SK-N-SH (cell line): ENCODE measurements at regions of chr2 and their contacts with region 1.

Region 1: GRCh38 chr2:201071479-201072200 is at the starts of genes HYCC2 and NDUFB3:
- DNase-seq: peak; percentile 97
- H3K4me3 ChIP-seq: peak within 1 kb of the TSS; percentile 88 to 98
- H3K27ac ChIP-seq: peak within 1 kb of the TSS; percentile 86 to 95
- H3K4me1 ChIP-seq: peaks cover 7 to 12% of the 10 kb centered on the region in 2 experiments; a peak in 3 of 4 replicates
- H3K27me3 ChIP-seq: no peaks in the 10 kb centered on the region
- CTCF ChIP-seq: peak; percentile 34
- EP300 ChIP-seq: no peak
- RAD21 ChIP-seq: peak; percentile 29; the same call in 1 of the 2 replicates
- polyA plus RNA-seq, gene HYCC2: 1.2 and 1.8 TPM in 2 replicates
- polyA plus RNA-seq, gene NDUFB3: 55.9 and 73.7 TPM in 2 replicates

Region 2: DNA sequence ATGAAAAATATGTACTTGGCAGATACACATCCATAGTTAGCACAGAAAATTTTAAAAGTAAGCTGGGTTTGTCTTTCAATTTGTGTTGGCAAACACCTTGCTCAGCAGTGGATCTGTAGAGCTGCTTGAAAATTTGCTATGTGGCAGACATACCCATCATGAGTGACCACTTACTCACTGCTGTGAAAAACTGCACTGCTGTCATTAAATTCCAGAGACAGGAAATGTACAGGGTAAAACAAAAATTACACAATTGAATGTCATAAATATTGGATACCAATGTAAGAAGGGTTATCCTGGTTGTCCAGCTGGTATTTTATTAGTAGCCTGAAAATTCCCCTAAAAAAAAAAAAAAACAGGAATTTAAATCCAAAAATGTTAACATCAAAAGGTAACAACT is 158.0 kb before region 1 on chr2:
- CTCF ChIA-PET with region 1: interaction called, 10 read pairs
- POLR2A ChIA-PET with region 1: no interaction called
- DNase-seq: no peak
- H3K4me3 ChIP-seq: no peak overlapping the region
- H3K27ac ChIP-seq: peak overlapping the region in 1 of 2 experiments; percentile 27; a peak in 1 of 4 replicates
- H3K4me1 ChIP-seq: no peaks in the 10 kb centered on the region
- H3K27me3 ChIP-seq: no peaks in the 10 kb centered on the region
- CTCF ChIP-seq: no peak
- EP300 ChIP-seq: no peak
- RAD21 ChIP-seq: no peak

Region 3: DNA sequence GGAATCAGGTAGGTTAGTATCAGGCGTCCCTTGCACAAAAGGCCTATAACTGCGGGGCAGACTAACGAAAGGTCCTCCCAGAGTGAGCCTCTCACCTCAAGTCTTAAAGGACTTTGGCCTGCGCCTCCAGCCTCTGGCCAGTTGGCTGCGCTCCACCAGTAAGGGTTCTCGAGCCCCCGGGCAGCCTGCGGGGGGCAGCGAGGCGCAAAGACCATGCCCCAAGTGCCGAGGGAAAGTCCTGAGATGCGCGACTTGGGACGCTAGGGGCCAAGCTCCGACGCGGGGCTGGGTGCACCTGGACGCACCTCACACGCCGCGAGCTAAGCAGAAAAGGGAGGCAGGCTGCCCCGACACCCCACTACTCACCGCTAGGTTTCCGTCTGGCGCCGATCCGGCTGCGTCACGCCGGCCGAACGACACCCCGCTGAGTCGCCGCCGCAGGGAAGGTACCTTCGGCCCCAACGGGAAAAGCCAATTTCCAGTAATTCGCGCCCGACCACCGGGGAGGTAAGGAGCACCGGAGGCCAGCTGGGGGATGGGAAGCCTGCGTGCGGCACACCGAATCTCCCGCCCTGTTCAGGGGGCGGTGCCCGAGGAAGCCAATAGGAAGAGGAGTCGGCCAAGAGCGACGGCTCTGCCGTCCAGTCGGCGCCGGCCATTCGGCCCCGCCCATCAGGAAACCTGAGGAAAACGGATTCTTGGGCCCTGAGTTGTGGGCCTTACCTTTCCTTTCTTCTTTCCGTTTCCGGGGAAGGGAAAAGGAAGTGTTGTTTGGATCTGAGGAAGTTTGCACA is 108.3 kb before region 1 on chr2 and contains the start of gene ORC2:
- CTCF ChIA-PET with region 1: interaction called, 57 read pairs
- POLR2A ChIA-PET with region 1: interaction called, 8 read pairs
- DNase-seq: peak; percentile 96
- H3K4me3 ChIP-seq: peak within 1 kb of the TSS; percentile 82 to 88
- H3K27ac ChIP-seq: peak within 1 kb of the TSS; percentile 75 to 82
- H3K4me1 ChIP-seq: peaks cover 11 to 12% of the 10 kb centered on the region in 2 experiments; a peak in 3 of 4 replicates
- H3K27me3 ChIP-seq: no peaks in the 10 kb centered on the region
- CTCF ChIP-seq: peak; percentile 72
- EP300 ChIP-seq: no peak
- RAD21 ChIP-seq: peak; percentile 45
- polyA plus RNA-seq, gene ORC2: 3.4 and 3.9 TPM in 2 replicates

Region 4: DNA sequence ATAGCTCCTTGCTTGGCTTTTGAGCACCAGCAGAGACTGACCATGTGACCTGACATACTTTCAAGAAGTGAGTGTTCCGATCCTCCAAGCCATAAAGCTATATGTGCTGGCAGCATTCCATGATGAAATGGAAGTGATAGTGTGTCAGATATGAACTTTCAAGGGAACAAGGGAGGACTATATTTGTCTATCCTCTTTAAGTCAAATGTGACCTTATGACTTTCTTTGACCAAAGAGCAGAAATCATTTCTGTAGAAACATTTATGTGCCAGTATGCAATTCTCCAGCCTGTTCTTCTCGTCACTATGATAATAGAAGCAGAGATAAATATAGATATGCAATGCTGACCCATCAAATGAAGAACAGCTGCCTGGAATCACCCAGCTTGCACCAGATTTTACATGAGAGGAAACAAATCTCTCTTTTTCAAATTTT is 14.5 kb before region 1 on chr2:
- CTCF ChIA-PET with region 1: interaction called, 20 read pairs
- POLR2A ChIA-PET with region 1: no interaction called
- DNase-seq: peak; percentile 44
- H3K4me3 ChIP-seq: no peak overlapping the region; a peak in 1 of 4 replicates
- H3K27ac ChIP-seq: peak overlapping the region; percentile 69 to 77
- H3K4me1 ChIP-seq: peaks cover 8 to 11% of the 10 kb centered on the region in 2 experiments
- H3K27me3 ChIP-seq: no peaks in the 10 kb centered on the region
- CTCF ChIP-seq: no peak
- EP300 ChIP-seq: no peak
- RAD21 ChIP-seq: no peak; the same call in 1 of the 2 replicates

Region 5: GRCh38 chr2:201182650-201183364 is 111.2 kb after region 1 on chr2 and contains the start of gene CASP10:
- CTCF ChIA-PET with region 1: interaction called, 17 read pairs
- POLR2A ChIA-PET with region 1: no interaction called
- DNase-seq: no peak
- H3K4me3 ChIP-seq: no peak within 1 kb of the TSS
- H3K27ac ChIP-seq: no peak within 1 kb of the TSS
- H3K4me1 ChIP-seq: no peaks in the 10 kb centered on the region
- H3K27me3 ChIP-seq: no peaks in the 10 kb centered on the region
- CTCF ChIP-seq: no peak
- EP300 ChIP-seq: no peak
- RAD21 ChIP-seq: no peak
- polyA plus RNA-seq, gene CASP10: 0.12 and 0.31 TPM in 2 replicates

Region 6: DNA sequence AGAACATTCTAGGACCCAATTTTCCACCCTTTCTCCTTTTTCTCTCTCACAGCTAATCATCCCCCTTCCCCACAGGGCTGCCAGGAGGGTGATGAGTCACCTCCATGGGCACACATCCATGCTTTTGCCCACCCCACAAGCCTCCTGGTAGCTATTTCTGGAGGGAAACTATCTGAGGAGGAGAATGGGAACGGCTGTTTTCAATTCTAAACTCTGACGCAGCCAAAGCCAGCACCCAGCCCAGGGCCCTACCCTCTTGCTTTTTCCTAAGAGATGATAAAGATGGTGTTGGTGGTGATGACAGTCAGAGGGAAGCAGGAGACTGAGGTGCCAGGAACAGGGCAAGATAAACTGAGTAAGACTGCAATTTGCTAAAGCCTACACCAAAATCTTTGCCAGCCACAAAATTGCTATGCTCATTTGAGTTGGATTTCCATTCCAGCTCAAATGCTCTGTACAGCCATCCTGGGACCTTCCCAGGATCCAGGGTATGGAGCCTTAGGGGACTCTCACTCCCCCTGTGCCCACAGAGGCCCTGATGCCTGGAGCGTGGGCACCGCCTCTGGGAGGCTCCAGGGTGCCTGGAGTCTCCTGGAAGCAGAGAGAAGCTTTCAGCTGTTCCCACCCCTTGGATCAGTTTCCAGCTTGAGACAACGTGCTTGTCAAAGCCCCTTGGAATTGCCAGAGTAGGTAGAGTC is 900.0 kb after region 1 on chr2:
- CTCF ChIA-PET with region 1: no interaction called
- POLR2A ChIA-PET with region 1: no interaction called
- DNase-seq: no peak
- H3K4me3 ChIP-seq: no peak overlapping the region
- H3K27ac ChIP-seq: peak overlapping the region; percentile 47 to 70; a peak in 3 of 4 replicates
- H3K4me1 ChIP-seq: peaks cover 8 to 65% of the 10 kb centered on the region in 2 experiments; a peak in 2 of 4 replicates
- H3K27me3 ChIP-seq: no peaks in the 10 kb centered on the region
- CTCF ChIP-seq: no peak
- EP300 ChIP-seq: peak; percentile 21 to 80; a peak in 2 of 4 replicates
- RAD21 ChIP-seq: no peak